ENCODE measurements at regions of chr6 and their contacts with region 1.

Region 1: GRCh38 chr6:16770701-16771569 is 9.7 kb upstream of the ATXN1 start:
- DNase-seq: peak; percentile 83 to 90
- H3K4me3 ChIP-seq: no peak overlapping the region
- H3K27ac ChIP-seq: peak overlapping the region in 3 of 5 donors; percentile 43 to 53 (median 52)
- H3K4me1 ChIP-seq: peaks cover 26 to 52% (median 39%) of the 10 kb centered on the region in 4 donors
- H3K27me3 ChIP-seq: no peaks in the 10 kb centered on the region
- CTCF ChIP-seq: peak in 5 of 7 experiments; percentile 82 to 90 (median 89)
- EP300 ChIP-seq: no peak
- POLR2A ChIP-seq: no peak

Region 2: GRCh38 chr6:16332175-16332542 is 438.8 kb before region 1 on chr6:
- intact Hi-C with region 1: loop called (anchors 10 kb)
- DNase-seq: peak; percentile 87 to 93
- H3K4me3 ChIP-seq: no peak overlapping the region
- H3K27ac ChIP-seq: peak overlapping the region in 2 of 5 donors; percentile 23 to 47
- H3K4me1 ChIP-seq: peaks cover 12 to 47% (median 24%) of the 10 kb centered on the region in 4 donors
- H3K27me3 ChIP-seq: no peaks in the 10 kb centered on the region
- CTCF ChIP-seq: peak in 5 of 7 experiments; percentile 83 to 94 (median 89)
- EP300 ChIP-seq: no peak
- POLR2A ChIP-seq: no peak

Region 3: GRCh38 chr6:16514249-16514648 is 256.7 kb before region 1 on chr6:
- intact Hi-C with region 1: loop called (anchors 5 kb)
- DNase-seq: peak in 1 of 2 donors; percentile 71
- H3K4me3 ChIP-seq: no peak overlapping the region
- H3K27ac ChIP-seq: peak overlapping the region in 1 of 5 donors; percentile 29
- H3K4me1 ChIP-seq: peaks cover 15 to 55% (median 37%) of the 10 kb centered on the region in 4 donors
- H3K27me3 ChIP-seq: no peaks in the 10 kb centered on the region
- CTCF ChIP-seq: peak in 4 of 7 experiments; percentile 26 to 52 (median 36)
- EP300 ChIP-seq: no peak
- POLR2A ChIP-seq: no peak

Region 4: DNA sequence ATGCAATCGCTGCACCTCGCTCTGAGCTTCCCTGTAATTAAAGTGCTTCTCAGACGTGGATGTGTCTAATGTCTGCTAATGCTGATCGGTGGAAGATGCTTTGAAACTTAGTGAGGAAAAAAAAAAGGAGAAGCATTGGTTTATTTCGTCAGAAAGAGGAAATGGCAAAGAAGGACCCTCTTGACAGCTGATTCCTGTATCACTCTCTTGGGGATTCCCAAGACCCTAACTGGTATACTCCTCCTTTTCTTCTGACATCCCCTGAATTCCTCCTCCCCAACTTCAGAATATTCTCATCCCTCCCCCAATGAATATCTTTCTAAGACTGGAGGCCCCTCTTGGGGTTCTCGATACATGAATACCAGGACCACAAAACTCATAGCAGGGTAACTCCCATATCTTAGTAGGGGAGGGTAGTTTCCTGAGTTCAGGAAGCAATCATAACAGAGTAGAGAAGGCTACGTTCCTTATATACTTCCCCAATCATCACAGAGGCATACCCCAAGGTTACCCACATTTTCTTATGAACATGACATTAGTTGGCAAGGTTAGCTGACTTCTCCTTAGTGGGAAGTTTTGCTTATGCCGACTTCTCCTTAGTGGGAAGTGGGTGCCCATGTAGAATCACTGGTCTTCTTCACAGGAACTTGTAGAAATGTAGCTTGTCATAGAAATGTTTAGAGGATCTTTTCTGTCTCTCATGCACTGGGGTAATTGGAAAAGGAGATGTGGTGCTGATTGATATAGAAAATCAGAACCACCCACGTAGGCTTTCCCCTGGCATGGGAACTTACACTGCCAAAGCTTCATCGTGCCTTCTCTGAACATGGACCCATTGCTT is 54.1 kb after region 1 on chr6:
- intact Hi-C with region 1: no loop called
- DNase-seq: no peak
- H3K4me3 ChIP-seq: no peak overlapping the region
- H3K27ac ChIP-seq: no peak overlapping the region
- H3K4me1 ChIP-seq: peaks cover 0 to 22% (median 5%) of the 10 kb centered on the region in 4 donors
- H3K27me3 ChIP-seq: no peaks in the 10 kb centered on the region
- CTCF ChIP-seq: no peak
- EP300 ChIP-seq: no peak
- POLR2A ChIP-seq: no peak

Measured in stomach (tissue), 19 donors.